Activated naive CD8-positive, alpha-beta T cell treated with anti-CD3 and anti-CD28 coated beads, Interleukin-2, amount 10 ng/mL, durations not matched to agents 7 days and 5 days (primary cell): ENCODE measurements at regions of chr17 and their contacts with region 1.

Region 1: DNA sequence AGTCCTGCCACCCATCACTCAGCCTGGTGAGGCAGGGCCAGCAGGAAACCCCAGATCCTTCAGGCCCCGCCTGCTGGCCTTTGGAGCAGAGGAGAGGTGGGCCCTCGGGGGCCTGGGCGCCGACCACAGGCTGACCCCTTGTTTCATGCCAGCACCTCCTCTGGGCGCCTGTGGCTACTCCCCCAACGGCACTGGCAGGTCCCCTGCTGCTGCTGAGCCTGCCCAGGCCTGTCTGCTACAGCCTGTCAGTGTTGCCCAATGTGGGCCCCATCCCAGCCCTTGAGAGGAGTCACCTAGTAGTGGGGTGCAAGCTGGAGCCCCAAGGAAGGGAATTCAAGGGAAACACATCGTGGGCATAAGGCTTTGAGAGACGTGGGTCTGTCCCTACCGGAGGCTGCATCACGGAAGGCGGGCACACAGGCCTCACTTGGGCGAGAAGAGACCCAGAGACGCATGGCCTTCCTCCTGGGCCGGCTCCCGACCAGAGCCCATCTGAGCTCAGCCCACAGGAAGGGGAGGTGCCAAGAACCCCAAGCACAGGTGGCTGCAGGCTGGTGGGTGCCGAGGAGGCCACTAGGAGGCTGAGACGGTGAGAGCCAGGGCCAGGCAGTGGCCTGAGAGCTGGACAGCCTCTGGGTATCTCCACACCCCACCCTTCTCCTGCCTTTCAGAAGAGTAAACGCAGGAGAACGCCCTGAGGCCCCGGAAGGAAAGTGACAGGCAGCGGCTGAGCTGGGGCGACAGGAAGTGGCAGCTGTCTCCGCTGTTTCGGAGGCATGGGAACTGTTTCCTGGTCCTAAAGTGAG is 8.0 kb upstream of the FASN start:
- DNase-seq: peak; percentile 75
- ATAC-seq: peak; percentile 87
- H3K4me3 Mint-ChIP-seq: peak overlapping the region; percentile 89
- H3K27ac Mint-ChIP-seq: peak overlapping the region; percentile 94
- H3K4me1 Mint-ChIP-seq: peaks cover 17% of the 10 kb centered on the region
- H3K27me3 Mint-ChIP-seq: no peaks in the 10 kb centered on the region

Region 2: DNA sequence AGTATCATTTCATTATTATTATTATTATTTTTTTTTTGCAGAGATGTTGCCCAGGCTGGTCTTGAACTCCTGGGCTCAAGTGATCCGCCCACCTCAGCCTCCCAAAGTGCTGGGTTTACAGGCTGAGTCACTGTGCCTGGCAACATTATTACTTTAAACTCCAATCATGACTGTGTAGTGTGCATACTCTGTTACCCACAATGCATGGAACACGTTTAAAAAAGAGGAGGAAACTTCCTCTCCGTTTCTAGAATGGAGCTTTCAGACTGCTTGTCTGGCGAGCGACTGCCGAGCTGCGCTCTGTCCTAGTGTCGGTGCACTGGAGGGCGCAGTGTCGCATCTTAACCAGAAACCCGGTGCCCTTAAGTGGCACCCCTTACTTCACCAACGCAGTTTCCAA is 14.1 kb after region 1 on chr17:
- POLR2A ChIA-PET with region 1: interaction called, 29 read pairs
- DNase-seq: no peak
- ATAC-seq: peak; percentile 57
- H3K4me3 Mint-ChIP-seq: no peak overlapping the region
- H3K27ac Mint-ChIP-seq: peak overlapping the region; percentile 40
- H3K4me1 Mint-ChIP-seq: peaks cover 22% of the 10 kb centered on the region
- H3K27me3 Mint-ChIP-seq: no peaks in the 10 kb centered on the region